Panc1 (cell line): ENCODE measurements at regions of chr7 and their contacts with region 1.

Region 1: GRCh38 chr7:102991540-102992214 is 78.9 kb downstream of the LRRC17 start:
- DNase-seq: peak; percentile 96
- ATAC-seq: peak; percentile 94
- H3K4me3 ChIP-seq: no peak overlapping the region
- H3K27ac ChIP-seq: peak overlapping the region; percentile 99
- H3K4me1 ChIP-seq: peaks cover 36% of the 10 kb centered on the region
- H3K27me3 ChIP-seq: no peaks in the 10 kb centered on the region
- CTCF ChIP-seq: no peak

Region 2: GRCh38 chr7:102889851-102890250 is 101.8 kb before region 1 on chr7:
- CTCF ChIA-PET with region 1: interaction called, 11 read pairs
- POLR2A ChIA-PET with region 1: no interaction called
- in situ Hi-C with region 1: no loop called
- intact Hi-C with region 1: no loop called
- DNase-seq: no peak
- ATAC-seq: no peak
- H3K4me3 ChIP-seq: no peak overlapping the region
- H3K27ac ChIP-seq: peak overlapping the region; percentile 4; the same call in 1 of the 2 replicates
- H3K4me1 ChIP-seq: peaks cover 10% of the 10 kb centered on the region; the same call in 1 of the 2 replicates
- H3K27me3 ChIP-seq: no peaks in the 10 kb centered on the region
- CTCF ChIP-seq: no peak

Region 3: DNA sequence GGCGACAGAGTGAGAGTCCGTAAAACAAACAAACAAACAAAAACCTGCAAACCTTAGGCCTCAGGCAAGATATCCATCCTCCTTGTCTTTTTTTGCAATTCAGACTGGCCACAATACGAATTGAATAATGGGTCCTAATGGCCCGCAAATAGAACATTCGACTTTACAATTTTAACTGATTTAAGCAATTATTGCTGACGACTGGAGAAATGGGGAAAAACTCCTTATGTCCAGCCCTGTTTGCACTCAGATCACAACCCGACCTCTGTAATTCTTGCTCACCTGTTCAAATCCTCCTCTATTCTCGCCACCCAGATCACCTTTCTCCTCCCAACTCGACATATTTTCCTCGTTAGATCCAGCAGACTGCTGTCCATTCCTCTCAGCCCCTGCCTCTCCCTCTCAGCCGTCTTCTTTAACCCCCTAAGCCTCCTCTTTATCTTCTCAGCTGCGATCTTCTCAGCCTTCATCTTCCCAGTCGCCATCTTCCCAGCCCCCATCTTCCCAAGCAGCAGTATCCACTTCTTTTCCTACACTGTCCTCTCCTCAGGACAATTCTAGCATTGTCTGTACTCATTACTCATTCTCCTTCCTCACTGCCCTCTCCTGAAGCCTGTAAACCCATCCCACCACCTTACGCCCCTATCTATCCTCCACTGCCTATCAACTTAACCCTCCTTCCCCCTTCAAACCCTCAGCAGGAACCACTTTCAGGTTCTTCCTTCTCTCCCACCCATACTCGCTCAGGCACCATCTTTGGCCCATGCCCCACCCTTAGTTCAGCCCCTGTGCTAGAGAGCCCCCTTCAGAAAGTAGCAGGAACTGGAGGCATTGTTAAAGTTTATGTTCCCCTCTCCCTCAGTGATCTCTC is 17.1 kb before region 1 on chr7:
- CTCF ChIA-PET with region 1: no interaction called
- POLR2A ChIA-PET with region 1: no interaction called
- in situ Hi-C with region 1: no loop called
- intact Hi-C with region 1: loop called (anchors 2 kb)
- DNase-seq: no peak
- ATAC-seq: no peak; the same call in 1 of the 2 replicates
- H3K4me3 ChIP-seq: no peak overlapping the region
- H3K27ac ChIP-seq: no peak overlapping the region; the same call in 1 of the 2 replicates
- H3K4me1 ChIP-seq: no peaks in the 10 kb centered on the region
- H3K27me3 ChIP-seq: no peaks in the 10 kb centered on the region
- CTCF ChIP-seq: no peak

Region 4: DNA sequence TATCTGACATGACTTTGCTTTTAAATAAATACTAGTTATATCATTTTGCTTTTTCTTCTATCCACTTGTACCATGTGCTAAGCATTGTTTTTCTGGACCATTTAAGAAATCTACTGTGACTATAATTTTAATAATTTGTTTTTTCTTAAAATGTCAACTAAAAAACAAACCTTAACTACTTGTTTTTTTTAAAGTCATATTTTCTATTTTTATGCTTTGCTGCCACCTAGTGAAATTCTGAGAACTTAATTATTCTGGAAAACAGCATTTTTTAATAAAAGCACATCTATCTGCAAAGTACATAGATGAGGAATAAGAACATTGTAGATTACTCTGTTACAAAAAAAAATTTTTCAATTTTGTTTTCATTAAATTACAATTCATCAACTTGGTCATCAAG is 1168.7 kb after region 1 on chr7:
- CTCF ChIA-PET with region 1: no interaction called
- POLR2A ChIA-PET with region 1: no interaction called
- in situ Hi-C with region 1: no loop called
- intact Hi-C with region 1: no loop called
- DNase-seq: no peak
- ATAC-seq: no peak
- H3K4me3 ChIP-seq: no peak overlapping the region
- H3K27ac ChIP-seq: no peak overlapping the region
- H3K4me1 ChIP-seq: no peaks in the 10 kb centered on the region
- H3K27me3 ChIP-seq: no peaks in the 10 kb centered on the region
- CTCF ChIP-seq: no peak